Activated T-helper 1 cell treated with anti-CD3 and anti-CD28 coated beads, Interleukin-12 subunit alpha, Interleukin-12 subunit beta, Interleukin-2, Interleukin-4 antibody, amounts not matched to agents 30 ng/mL and 10 ng/mL and 1 ng/mL, durations not matched to agents 14 hours and 24 hours and 36 hours (primary cell): ENCODE measurements at regions of chr4 and their contacts with region 1.

Region 1: GRCh38 chr4:83356899-83357661 is 22.4 kb upstream of the HPSE start:
- DNase-seq: no peak
- H3K4me3 Mint-ChIP-seq: peak overlapping the region; percentile 30
- H3K27ac Mint-ChIP-seq: peak overlapping the region; percentile 96
- H3K4me1 Mint-ChIP-seq: peaks cover 15% of the 10 kb centered on the region
- H3K27me3 Mint-ChIP-seq: no peaks in the 10 kb centered on the region

Region 2: GRCh38 chr4:82373816-82374625 is 983.1 kb before region 1 on chr4 and contains the start of gene HNRNPD:
- intact Hi-C with region 1: loop called (anchors 10 kb)
- DNase-seq: peak; percentile 92
- H3K4me3 Mint-ChIP-seq: peak within 1 kb of the TSS; percentile 99
- H3K27ac Mint-ChIP-seq: peak within 1 kb of the TSS; percentile 100
- H3K4me1 Mint-ChIP-seq: peaks cover 37% of the 10 kb centered on the region
- H3K27me3 Mint-ChIP-seq: peaks cover 2% of the 10 kb centered on the region
- total RNA-seq, gene HNRNPD: 434 and 438 TPM in 2 replicates

Region 3: GRCh38 chr4:83034630-83035494 is 322.2 kb before region 1 on chr4 and contains the start of gene COPS4:
- intact Hi-C with region 1: loop called (anchors 2 kb)
- DNase-seq: peak; percentile 95
- H3K4me3 Mint-ChIP-seq: peak within 1 kb of the TSS; percentile 98
- H3K27ac Mint-ChIP-seq: peak within 1 kb of the TSS; percentile 99
- H3K4me1 Mint-ChIP-seq: peaks cover 20% of the 10 kb centered on the region
- H3K27me3 Mint-ChIP-seq: peaks cover 6% of the 10 kb centered on the region
- total RNA-seq, gene COPS4: 35.8 and 38.8 TPM in 2 replicates

Region 4: DNA sequence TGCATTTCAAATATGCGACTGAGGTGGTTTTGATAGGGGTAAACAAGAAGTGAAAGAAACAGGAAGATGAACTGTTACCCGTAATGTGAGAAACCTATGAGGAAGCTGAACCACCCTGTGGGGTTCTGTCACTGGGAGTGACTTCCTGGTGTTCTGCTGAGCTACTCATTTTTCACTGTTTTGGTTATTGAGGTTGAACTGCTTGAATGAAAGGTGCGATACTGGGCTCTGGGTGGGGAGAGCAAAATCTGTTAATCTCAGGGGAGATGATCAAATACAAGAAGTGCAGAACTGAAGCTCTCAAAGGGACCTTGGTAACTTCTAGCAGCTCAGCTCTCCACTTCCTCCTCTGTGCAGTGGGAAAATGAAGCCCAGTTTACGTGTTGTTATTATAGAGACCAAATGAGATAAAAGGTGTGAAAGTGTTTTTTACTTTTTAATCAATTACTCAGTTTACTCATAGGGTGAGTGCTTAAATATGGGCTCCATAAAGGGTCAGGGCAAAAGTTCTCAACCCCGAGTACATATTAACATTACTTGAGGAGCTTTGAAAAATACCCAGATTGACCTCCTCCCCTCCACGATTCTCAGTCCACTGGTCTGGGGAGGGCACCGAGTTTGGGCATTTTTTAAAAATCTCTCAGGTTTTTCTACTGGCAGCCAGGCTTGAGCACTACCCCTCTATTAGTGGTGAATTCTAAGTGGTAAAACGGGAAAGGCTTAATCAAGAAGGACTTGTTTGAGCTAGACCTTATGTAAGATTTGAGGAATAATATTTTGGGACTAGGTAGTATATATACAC is 139.2 kb before region 1 on chr4:
- intact Hi-C with region 1: loop called (anchors 1 kb)
- DNase-seq: peak; percentile 73
- H3K4me3 Mint-ChIP-seq: peak overlapping the region; percentile 66
- H3K27ac Mint-ChIP-seq: peak overlapping the region; percentile 91
- H3K4me1 Mint-ChIP-seq: peaks cover 81% of the 10 kb centered on the region
- H3K27me3 Mint-ChIP-seq: peaks cover 2% of the 10 kb centered on the region

Region 5: GRCh38 chr4:83284193-83285054 is 72.7 kb before region 1 on chr4 and contains the start of gene COQ2:
- intact Hi-C with region 1: loop called (anchors 1 kb)
- DNase-seq: peak; percentile 93
- H3K4me3 Mint-ChIP-seq: peak within 1 kb of the TSS; percentile 97
- H3K27ac Mint-ChIP-seq: peak within 1 kb of the TSS; percentile 99
- H3K4me1 Mint-ChIP-seq: peaks cover 48% of the 10 kb centered on the region
- H3K27me3 Mint-ChIP-seq: no peaks in the 10 kb centered on the region
- total RNA-seq, gene COQ2: 22.5 and 22.6 TPM in 2 replicates

Region 6: GRCh38 chr4:83431200-83431599 is 74.1 kb after region 1 on chr4:
- intact Hi-C with region 1: no loop called
- DNase-seq: no peak
- H3K4me3 Mint-ChIP-seq: no peak overlapping the region
- H3K27ac Mint-ChIP-seq: no peak overlapping the region
- H3K4me1 Mint-ChIP-seq: peaks cover 3% of the 10 kb centered on the region
- H3K27me3 Mint-ChIP-seq: no peaks in the 10 kb centered on the region

Region 7: DNA sequence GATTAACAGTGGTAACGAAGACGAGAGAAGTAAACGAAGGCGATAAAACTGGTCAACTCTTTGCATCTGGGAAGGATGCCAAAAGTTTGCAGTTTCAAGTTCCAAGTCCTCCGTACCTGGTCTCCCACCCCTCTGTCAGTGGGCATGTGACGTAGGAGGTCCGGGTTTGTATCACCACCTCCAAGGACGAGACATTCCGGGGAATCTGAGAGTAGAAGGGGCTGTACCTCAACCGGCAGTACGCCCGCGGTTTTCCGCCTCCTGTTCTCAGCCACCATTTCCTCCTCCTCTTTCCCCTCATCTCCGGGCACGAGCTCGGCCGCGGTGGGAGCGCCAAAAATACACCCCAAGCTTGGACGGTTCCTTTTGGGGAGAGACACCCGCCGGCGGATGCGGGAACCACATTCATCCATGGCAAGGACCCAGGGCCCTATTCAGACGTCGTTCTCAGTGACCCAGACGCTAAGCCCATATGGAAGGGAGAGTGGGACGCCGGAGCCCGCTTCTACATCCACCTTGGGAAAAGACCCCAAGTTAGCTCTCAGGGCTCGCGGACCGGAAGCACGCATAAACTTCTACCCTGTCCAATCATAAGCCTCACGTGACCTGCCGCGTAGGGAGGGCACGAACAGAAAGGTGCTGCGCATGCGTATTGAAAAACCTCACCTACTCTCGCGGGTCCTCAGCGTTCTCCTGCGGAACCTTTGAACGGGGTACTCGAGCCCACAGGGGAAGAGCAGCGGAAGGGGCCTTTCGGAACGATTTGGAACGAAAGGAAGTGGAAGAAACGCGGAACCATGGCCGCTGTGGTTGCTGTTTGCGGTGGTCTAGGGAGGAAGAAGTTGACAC is 98.4 kb after region 1 on chr4 and contains the starts of genes HELQ and MRPS18C:
- intact Hi-C with region 1: loop called (anchors 1 kb)
- DNase-seq: peak; percentile 95
- H3K4me3 Mint-ChIP-seq: peak within 1 kb of the TSS; percentile 96
- H3K27ac Mint-ChIP-seq: peak within 1 kb of the TSS; percentile 98
- H3K4me1 Mint-ChIP-seq: peaks cover 45% of the 10 kb centered on the region
- H3K27me3 Mint-ChIP-seq: no peaks in the 10 kb centered on the region
- total RNA-seq, gene HELQ: 8.8 and 9.7 TPM in 2 replicates
- total RNA-seq, gene MRPS18C: 76.8 and 80.3 TPM in 2 replicates

Region 8: GRCh38 chr4:83639849-83640493 is 282.9 kb after region 1 on chr4:
- intact Hi-C with region 1: loop called (anchors 10 kb)
- DNase-seq: peak; percentile 31
- H3K4me3 Mint-ChIP-seq: no peak overlapping the region
- H3K27ac Mint-ChIP-seq: no peak overlapping the region
- H3K4me1 Mint-ChIP-seq: peaks cover 4% of the 10 kb centered on the region
- H3K27me3 Mint-ChIP-seq: peaks cover 6% of the 10 kb centered on the region